Aorta (tissue), 5 donors: ENCODE measurements at regions of chr7 and their contacts with region 1.

Region 1: GRCh38 chr7:73842247-73842895 is at the start of gene METTL27:
- DNase-seq: peak; percentile 96
- ATAC-seq: peak; percentile 94
- H3K4me3 ChIP-seq: peak within 1 kb of the TSS; percentile 45 to 74
- H3K27ac ChIP-seq: peak within 1 kb of the TSS in 1 of 2 donors; percentile 37
- H3K4me1 ChIP-seq: no peaks in the 10 kb centered on the region
- H3K27me3 ChIP-seq: no peaks in the 10 kb centered on the region
- total RNA-seq, gene METTL27: 1.3 to 7.4 TPM

Region 2: GRCh38 chr7:73742693-73743595 is 99.4 kb before region 1 on chr7:
- intact Hi-C with region 1: loop called in 1 of 2 experiments (anchors 5 kb)
- DNase-seq: peak; percentile 57 to 80
- ATAC-seq: no peak
- H3K4me3 ChIP-seq: no peak overlapping the region
- H3K27ac ChIP-seq: no peak overlapping the region
- H3K4me1 ChIP-seq: no peaks in the 10 kb centered on the region
- H3K27me3 ChIP-seq: no peaks in the 10 kb centered on the region

Region 3: GRCh38 chr7:73921623-73922528 is 79.5 kb after region 1 on chr7:
- intact Hi-C with region 1: no loop called
- DNase-seq: no peak
- ATAC-seq: peak; percentile 62
- H3K4me3 ChIP-seq: no peak overlapping the region
- H3K27ac ChIP-seq: no peak overlapping the region
- H3K4me1 ChIP-seq: no peaks in the 10 kb centered on the region
- H3K27me3 ChIP-seq: no peaks in the 10 kb centered on the region

Region 4: DNA sequence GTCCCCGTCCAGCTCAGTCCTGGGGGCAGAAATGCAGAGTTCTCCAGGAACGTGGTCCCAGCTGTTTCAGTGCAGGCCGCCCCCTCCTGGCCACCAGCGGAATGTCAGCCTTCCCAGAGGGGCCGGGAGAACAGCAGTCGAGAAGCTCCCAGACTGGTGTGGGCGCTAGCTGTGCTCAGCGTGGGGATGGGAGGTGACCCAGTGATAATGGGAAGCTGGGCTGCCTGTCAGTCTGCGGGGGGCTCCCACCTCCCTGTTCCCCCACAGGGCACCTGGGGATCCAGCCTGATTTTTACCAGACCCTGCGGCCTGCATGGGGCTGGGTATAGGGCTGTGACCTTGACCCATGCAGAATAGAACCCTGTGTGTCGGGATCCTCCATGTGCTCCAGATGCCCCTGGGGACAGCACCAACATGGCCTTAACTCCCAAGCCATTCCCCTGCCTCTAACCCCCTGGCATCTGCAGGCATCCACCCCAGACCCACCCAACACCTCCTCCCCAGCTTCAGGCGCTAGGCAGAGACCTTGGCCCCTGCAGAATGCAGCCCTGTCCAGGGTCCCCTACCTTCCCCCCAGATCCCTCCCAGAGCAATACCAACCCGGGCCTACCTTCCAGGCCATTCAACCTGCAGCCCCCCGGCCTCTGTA is 184.7 kb after region 1 on chr7:
- intact Hi-C with region 1: no loop called
- DNase-seq: peak; percentile 89 to 95
- ATAC-seq: peak; percentile 82
- H3K4me3 ChIP-seq: no peak overlapping the region
- H3K27ac ChIP-seq: peak overlapping the region; percentile 83 to 89
- H3K4me1 ChIP-seq: peaks cover 0 to 8% of the 10 kb centered on the region in 2 donors
- H3K27me3 ChIP-seq: no peaks in the 10 kb centered on the region